GM23248 (cell line): ENCODE measurements at regions of chr17 and their contacts with region 1.

Region 1: GRCh38 chr17:17356149-17356930 is 53.2 kb downstream of the NT5M start:
- DNase-seq: peak; percentile 90
- H3K4me3 ChIP-seq: no peak overlapping the region
- H3K27ac ChIP-seq: no peak overlapping the region
- H3K4me1 ChIP-seq: no peaks in the 10 kb centered on the region
- H3K27me3 ChIP-seq: no peaks in the 10 kb centered on the region

Region 2: GRCh38 chr17:17303010-17303846 is 53.1 kb before region 1 on chr17 and contains the start of gene NT5M:
- in situ Hi-C with region 1: no loop called
- DNase-seq: peak; percentile 92
- H3K4me3 ChIP-seq: peak within 1 kb of the TSS; percentile 81
- H3K27ac ChIP-seq: no peak within 1 kb of the TSS; the same call in 1 of the 2 replicates
- H3K4me1 ChIP-seq: peaks cover 4% of the 10 kb centered on the region
- H3K27me3 ChIP-seq: no peaks in the 10 kb centered on the region
- total RNA-seq, gene NT5M: 0.63 and 5.1 TPM in 2 replicates

Region 3: DNA sequence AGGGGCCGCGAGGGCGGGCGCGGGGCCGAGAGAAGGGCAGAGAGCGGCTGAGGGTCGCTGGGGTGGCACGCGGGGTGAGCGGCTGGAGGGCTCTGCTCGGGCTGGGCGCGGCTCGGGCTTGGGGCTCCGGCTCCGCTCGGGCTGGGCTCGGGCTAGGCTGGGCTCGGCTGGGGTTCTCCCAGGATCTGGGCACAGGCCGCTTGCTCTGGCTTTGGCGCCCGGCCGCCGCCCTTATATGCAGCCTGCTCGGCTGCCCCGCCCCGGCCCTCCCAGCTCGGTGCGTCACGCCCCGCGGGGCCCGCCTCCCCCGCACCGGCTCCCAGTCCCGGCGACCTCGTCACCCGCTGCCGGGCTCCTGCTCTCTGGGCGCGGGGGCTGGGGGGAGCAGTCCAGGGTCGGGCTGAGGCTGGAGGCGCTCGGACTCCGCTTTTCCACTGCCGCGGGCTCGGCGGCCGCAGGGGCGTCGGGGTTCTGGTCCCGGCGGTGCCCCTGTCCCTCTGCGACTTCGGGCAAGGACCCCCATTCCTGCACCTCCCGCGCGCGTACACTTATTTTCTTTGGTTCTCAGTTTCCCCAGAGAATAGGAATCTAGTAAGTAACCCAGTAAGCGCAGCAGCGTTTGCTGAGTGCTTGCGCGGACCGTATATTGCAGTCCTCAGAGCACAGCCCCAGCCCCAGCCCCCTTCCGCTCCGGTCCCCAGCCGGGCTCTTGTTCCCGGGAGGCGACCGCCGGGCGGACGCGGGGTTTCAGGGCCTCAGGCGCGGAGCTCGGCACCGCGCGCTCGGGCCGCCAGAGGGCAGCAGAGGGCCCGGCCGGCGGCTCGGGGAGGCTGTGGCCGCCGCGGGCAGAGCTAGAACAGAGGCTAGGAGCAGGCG is 140.1 kb after region 1 on chr17 and contains the start of gene RASD1:
- in situ Hi-C with region 1: loop called (anchors 10 kb)
- DNase-seq: peak; percentile 97
- H3K4me3 ChIP-seq: peak within 1 kb of the TSS; percentile 85
- H3K27ac ChIP-seq: peak within 1 kb of the TSS; percentile 55
- H3K4me1 ChIP-seq: peaks cover 3% of the 10 kb centered on the region; the same call in 1 of the 2 replicates
- H3K27me3 ChIP-seq: no peaks in the 10 kb centered on the region
- total RNA-seq, gene RASD1: 0.89 and 2.2 TPM in 2 replicates

Region 4: DNA sequence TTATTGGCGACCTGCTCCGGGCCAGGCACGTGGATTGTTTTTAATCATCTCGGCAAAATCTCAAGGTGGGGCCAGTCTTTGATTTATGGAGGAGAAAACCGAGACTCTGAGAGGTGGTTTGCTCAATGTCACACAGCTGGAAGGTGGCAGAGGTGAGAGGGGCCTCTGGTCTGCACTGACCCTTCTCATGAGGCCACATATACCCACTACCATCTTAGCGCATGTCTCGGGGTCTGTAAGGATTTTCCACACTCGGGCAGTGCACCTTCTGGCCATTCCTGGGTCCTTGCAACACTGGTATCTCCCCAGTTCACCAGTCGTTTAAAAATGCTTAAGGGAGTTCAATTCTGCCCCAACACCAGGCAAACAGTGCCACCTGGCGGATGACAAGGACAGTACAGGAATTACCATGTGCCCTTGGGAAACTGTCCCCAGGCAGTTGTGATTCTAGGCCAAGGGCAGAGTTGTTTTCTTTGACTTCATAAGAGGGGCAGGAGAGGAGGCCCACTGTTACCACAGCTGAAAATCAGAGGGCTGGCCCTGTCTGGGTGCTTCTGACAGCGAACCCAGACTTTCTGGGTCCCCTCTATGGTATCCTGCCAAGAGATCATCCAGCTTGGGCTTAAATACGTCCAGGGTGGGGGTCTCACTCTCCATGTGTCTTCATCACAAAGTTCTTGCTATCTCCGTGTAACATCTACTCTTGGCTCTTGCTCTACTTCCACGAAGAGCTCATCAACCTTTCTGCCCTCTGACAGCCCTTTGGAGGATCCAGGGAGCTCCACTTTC is 285.5 kb after region 1 on chr17:
- in situ Hi-C with region 1: loop called (anchors 10 kb)
- DNase-seq: peak; percentile 78
- H3K4me3 ChIP-seq: no peak overlapping the region
- H3K27ac ChIP-seq: no peak overlapping the region
- H3K4me1 ChIP-seq: no peaks in the 10 kb centered on the region
- H3K27me3 ChIP-seq: no peaks in the 10 kb centered on the region